CD4-positive, alpha-beta memory T cell (primary cell): ENCODE measurements at regions of chr7 and their contacts with region 1.

Region 1: GRCh38 chr7:142811154-142811737 is 40.5 kb downstream of the PRSS2 start:
- DNase-seq: peak; percentile 64 to 82 (median 79)
- H3K4me3 ChIP-seq: no peak overlapping the region
- H3K4me3 Mint-ChIP-seq: peak overlapping the region in 7 of 8 donors; percentile 57 to 79 (median 71)
- H3K27ac ChIP-seq: peak overlapping the region; percentile 99
- H3K27ac Mint-ChIP-seq: peak overlapping the region; percentile 92 to 100 (median 100)
- H3K4me1 ChIP-seq: peaks cover 79% of the 10 kb centered on the region
- H3K4me1 Mint-ChIP-seq: peaks cover 48 to 76% (median 73%) of the 10 kb centered on the region in 4 donors
- H3K27me3 ChIP-seq: no peaks in the 10 kb centered on the region
- H3K27me3 Mint-ChIP-seq: no peaks in the 10 kb centered on the region

Region 2: DNA sequence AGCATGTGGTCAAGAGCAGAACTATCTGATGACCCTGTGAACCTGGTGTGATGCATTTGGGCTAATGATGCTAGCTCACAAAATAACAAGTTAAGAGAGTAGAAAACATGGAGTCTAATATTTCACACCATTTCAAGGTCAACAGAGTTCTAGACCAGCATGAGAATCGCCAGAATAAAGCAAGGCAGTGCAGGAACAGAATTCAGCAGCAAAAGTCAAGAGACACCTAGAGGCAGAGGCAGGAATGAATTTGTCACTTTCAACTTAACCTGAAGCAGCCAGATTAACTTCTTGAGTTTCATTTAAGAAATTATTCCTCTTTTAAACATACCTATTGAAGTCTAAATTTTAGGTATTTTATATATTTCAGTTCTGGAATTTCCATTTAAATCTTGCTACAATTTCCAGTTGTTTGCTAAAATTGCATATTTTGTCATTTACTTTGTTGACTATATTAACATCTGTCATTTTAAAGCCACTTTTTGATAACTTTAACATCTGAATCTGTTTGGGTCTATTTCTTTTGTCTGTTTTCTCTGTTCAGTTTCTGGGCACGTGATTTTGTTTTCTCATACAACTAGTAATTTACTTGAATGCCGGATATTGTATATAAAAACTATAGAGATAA is 509.2 kb before region 1 on chr7:
- CTCF ChIA-PET with region 1: interaction called, 48 read pairs
- POLR2A ChIA-PET with region 1: interaction called, 111 read pairs
- intact Hi-C with region 1: loop called (anchors 1 kb)
- DNase-seq: no peak
- H3K4me3 ChIP-seq: no peak overlapping the region
- H3K4me3 Mint-ChIP-seq: no peak overlapping the region
- H3K27ac ChIP-seq: no peak overlapping the region
- H3K27ac Mint-ChIP-seq: no peak overlapping the region
- H3K4me1 ChIP-seq: peaks cover 8% of the 10 kb centered on the region
- H3K4me1 Mint-ChIP-seq: peaks cover 14 to 28% (median 18%) of the 10 kb centered on the region in 4 donors
- H3K27me3 ChIP-seq: no peaks in the 10 kb centered on the region
- H3K27me3 Mint-ChIP-seq: peaks cover 15 to 18% of the 10 kb centered on the region in 2 donors

Region 3: DNA sequence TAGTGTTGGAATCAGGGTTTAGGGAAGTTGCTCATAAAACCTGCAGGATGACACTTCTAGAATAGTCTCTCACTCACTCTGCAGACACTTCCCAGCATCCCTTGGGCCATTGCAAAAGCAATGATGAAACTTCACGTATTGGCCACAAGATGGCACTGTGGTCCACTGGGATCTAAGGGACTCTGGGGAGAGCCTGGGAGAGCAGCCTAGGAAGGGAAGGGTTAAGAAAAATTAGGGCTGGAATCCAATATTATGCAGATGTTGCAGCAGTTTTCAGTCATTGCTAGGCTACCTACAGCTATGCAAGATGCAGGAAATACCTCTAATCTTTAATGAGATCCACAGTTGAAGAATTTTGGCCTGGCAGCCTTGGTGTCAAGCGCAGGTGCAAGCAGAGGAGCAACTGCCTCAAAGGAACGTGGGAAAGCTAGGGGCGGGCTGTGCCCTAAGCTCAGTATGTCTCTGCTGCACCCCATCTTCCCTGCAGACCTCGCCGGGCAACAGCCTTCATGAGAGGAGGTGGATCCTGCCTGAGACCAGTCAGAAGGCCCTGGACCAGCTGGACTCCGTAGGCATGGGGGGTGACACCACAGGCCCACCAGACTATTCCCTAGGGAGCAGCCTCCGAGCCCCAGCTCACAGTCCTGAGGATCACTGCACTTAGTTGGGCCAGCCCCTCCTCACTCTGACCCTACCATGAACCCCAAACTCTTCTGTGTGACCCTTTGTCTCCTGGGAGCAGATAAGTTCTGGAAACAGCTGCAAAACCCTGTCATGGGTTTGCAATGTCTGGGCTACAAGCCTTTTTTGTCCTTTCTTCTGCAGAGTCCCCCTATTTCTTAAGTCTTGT is 425.5 kb before region 1 on chr7:
- CTCF ChIA-PET with region 1: interaction called, 6 read pairs
- POLR2A ChIA-PET with region 1: interaction called, 19 read pairs
- intact Hi-C with region 1: loop called (anchors 5 kb)
- DNase-seq: peak in 4 of 5 donors; percentile 16 to 31 (median 28)
- H3K4me3 ChIP-seq: no peak overlapping the region
- H3K4me3 Mint-ChIP-seq: peak overlapping the region in 4 of 8 donors; percentile 3 to 32 (median 11)
- H3K27ac ChIP-seq: no peak overlapping the region
- H3K27ac Mint-ChIP-seq: peak overlapping the region in 2 of 7 donors; percentile 25 to 46
- H3K4me1 ChIP-seq: peaks cover 20% of the 10 kb centered on the region
- H3K4me1 Mint-ChIP-seq: peaks cover 18 to 28% (median 20%) of the 10 kb centered on the region in 4 donors
- H3K27me3 ChIP-seq: no peaks in the 10 kb centered on the region
- H3K27me3 Mint-ChIP-seq: no peaks in the 10 kb centered on the region

Region 4: GRCh38 chr7:142485617-142486226 is 325.5 kb before region 1 on chr7:
- CTCF ChIA-PET with region 1: interaction called, 6 read pairs
- POLR2A ChIA-PET with region 1: interaction called, 14 read pairs
- intact Hi-C with region 1: loop called (anchors 5 kb)
- DNase-seq: peak in 3 of 5 donors; percentile 24 to 35 (median 31)
- H3K4me3 ChIP-seq: no peak overlapping the region
- H3K4me3 Mint-ChIP-seq: peak overlapping the region in 1 of 8 donors; percentile 40
- H3K27ac ChIP-seq: no peak overlapping the region
- H3K27ac Mint-ChIP-seq: peak overlapping the region in 6 of 7 donors; percentile 11 to 85 (median 56)
- H3K4me1 ChIP-seq: peaks cover 35% of the 10 kb centered on the region
- H3K4me1 Mint-ChIP-seq: peaks cover 30 to 53% (median 37%) of the 10 kb centered on the region in 4 donors
- H3K27me3 ChIP-seq: no peaks in the 10 kb centered on the region
- H3K27me3 Mint-ChIP-seq: no peaks in the 10 kb centered on the region

Region 5: GRCh38 chr7:142603870-142604448 is 207.3 kb before region 1 on chr7:
- CTCF ChIA-PET with region 1: interaction called, 16 read pairs
- POLR2A ChIA-PET with region 1: interaction called, 63 read pairs
- intact Hi-C with region 1: loop called (anchors 1 kb)
- DNase-seq: peak; percentile 50 to 59 (median 53)
- H3K4me3 ChIP-seq: no peak overlapping the region
- H3K4me3 Mint-ChIP-seq: peak overlapping the region in 4 of 8 donors; percentile 11 to 58 (median 28)
- H3K27ac ChIP-seq: no peak overlapping the region
- H3K27ac Mint-ChIP-seq: peak overlapping the region in 3 of 7 donors; percentile 13 to 57 (median 24)
- H3K4me1 ChIP-seq: no peaks in the 10 kb centered on the region
- H3K4me1 Mint-ChIP-seq: peaks cover under 1 to 12% (median 5%) of the 10 kb centered on the region in 4 donors
- H3K27me3 ChIP-seq: no peaks in the 10 kb centered on the region
- H3K27me3 Mint-ChIP-seq: no peaks in the 10 kb centered on the region

Region 6: DNA sequence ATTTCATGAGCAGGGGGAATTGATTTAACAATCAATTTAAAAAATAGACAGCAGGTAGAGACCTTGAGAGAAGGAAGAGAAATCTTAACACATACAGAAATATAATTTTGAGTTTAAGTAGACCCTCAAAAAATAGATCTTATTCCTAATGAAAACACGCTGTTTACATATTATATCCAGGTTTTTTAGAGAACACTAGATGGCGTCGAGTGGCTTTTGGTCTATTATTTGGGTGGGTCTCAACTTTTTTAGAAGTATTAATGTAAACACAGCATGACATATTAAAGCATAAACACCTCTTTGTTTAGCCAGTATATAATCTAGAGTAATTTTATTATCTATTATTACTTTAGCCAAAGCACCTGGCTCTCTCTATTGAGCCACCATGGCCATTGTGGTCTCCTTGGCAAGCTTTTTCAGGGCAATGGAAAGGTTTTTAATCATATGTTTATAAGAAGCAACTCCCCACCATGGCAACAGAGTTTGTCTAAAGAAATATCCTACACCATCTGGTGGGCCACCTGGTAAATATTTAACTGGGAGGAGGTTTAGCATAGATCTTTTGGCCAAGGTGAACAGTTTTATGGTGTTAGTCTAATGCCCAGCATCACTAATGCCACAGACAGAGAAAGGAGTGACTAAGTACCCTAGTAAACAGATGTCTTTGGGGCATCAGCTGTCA is 121.7 kb before region 1 on chr7:
- CTCF ChIA-PET with region 1: interaction called, 3 read pairs
- POLR2A ChIA-PET with region 1: interaction called, 24 read pairs
- intact Hi-C with region 1: no loop called
- DNase-seq: no peak
- H3K4me3 ChIP-seq: no peak overlapping the region
- H3K4me3 Mint-ChIP-seq: no peak overlapping the region
- H3K27ac ChIP-seq: no peak overlapping the region
- H3K27ac Mint-ChIP-seq: peak overlapping the region in 3 of 7 donors; percentile 24 to 89 (median 77)
- H3K4me1 ChIP-seq: peaks cover 22% of the 10 kb centered on the region
- H3K4me1 Mint-ChIP-seq: peaks cover 16 to 40% (median 26%) of the 10 kb centered on the region in 4 donors
- H3K27me3 ChIP-seq: no peaks in the 10 kb centered on the region
- H3K27me3 Mint-ChIP-seq: no peaks in the 10 kb centered on the region

Region 7: GRCh38 chr7:142880876-142881505 is 69.7 kb after region 1 on chr7:
- CTCF ChIA-PET with region 1: interaction called, 10 read pairs
- POLR2A ChIA-PET with region 1: no interaction called
- intact Hi-C with region 1: no loop called
- DNase-seq: peak; percentile 35 to 57 (median 55)
- H3K4me3 ChIP-seq: no peak overlapping the region
- H3K4me3 Mint-ChIP-seq: no peak overlapping the region
- H3K27ac ChIP-seq: no peak overlapping the region
- H3K27ac Mint-ChIP-seq: no peak overlapping the region
- H3K4me1 ChIP-seq: no peaks in the 10 kb centered on the region
- H3K4me1 Mint-ChIP-seq: peaks cover 0 to 4% (median 0%) of the 10 kb centered on the region in 4 donors
- H3K27me3 ChIP-seq: no peaks in the 10 kb centered on the region
- H3K27me3 Mint-ChIP-seq: peaks cover 2 to 8% of the 10 kb centered on the region in 2 donors